Caco-2 (cell line): ENCODE measurements at regions of chr20 and their contacts with region 1.

Region 1: GRCh38 chr20:17995967-17996819 is 27.4 kb downstream of the MGME1 start:
- DNase-seq: peak in 1 of 2 experiments; percentile 59
- H3K4me3 ChIP-seq: no peak overlapping the region
- H3K4me3 Mint-ChIP-seq: no peak overlapping the region
- H3K27ac Mint-ChIP-seq: no peak overlapping the region
- H3K4me1 ChIP-seq: peaks cover 6% of the 10 kb centered on the region
- H3K4me1 Mint-ChIP-seq: peaks cover 12% of the 10 kb centered on the region
- H3K27me3 ChIP-seq: no peaks in the 10 kb centered on the region
- H3K27me3 Mint-ChIP-seq: no peaks in the 10 kb centered on the region
- CTCF ChIP-seq: peak; percentile 88 to 94

Region 2: GRCh38 chr20:17938871-17939619 is 57.1 kb before region 1 on chr20:
- CTCF ChIA-PET with region 1: interaction called, 6 read pairs
- POLR2A ChIA-PET with region 1: no interaction called
- intact Hi-C with region 1: loop called (anchors 5 kb)
- DNase-seq: peak; percentile 75 to 83
- H3K4me3 ChIP-seq: no peak overlapping the region
- H3K4me3 Mint-ChIP-seq: no peak overlapping the region
- H3K27ac Mint-ChIP-seq: peak overlapping the region; percentile 66
- H3K4me1 ChIP-seq: no peaks in the 10 kb centered on the region
- H3K4me1 Mint-ChIP-seq: no peaks in the 10 kb centered on the region
- H3K27me3 ChIP-seq: no peaks in the 10 kb centered on the region
- H3K27me3 Mint-ChIP-seq: no peaks in the 10 kb centered on the region
- CTCF ChIP-seq: peak; percentile 94 to 96

Region 3: GRCh38 chr20:17958373-17959256 is 37.6 kb before region 1 on chr20:
- CTCF ChIA-PET with region 1: no interaction called
- POLR2A ChIA-PET with region 1: interaction called, 11 read pairs
- intact Hi-C with region 1: loop called (anchors 5 kb)
- DNase-seq: peak; percentile 60 to 67
- H3K4me3 ChIP-seq: no peak overlapping the region
- H3K4me3 Mint-ChIP-seq: peak overlapping the region; percentile 29
- H3K27ac Mint-ChIP-seq: peak overlapping the region; percentile 83
- H3K4me1 ChIP-seq: peaks cover 57% of the 10 kb centered on the region
- H3K4me1 Mint-ChIP-seq: peaks cover 60% of the 10 kb centered on the region
- H3K27me3 ChIP-seq: no peaks in the 10 kb centered on the region
- H3K27me3 Mint-ChIP-seq: no peaks in the 10 kb centered on the region
- CTCF ChIP-seq: no peak